ENCODE measurements at regions of chrX and their contacts with region 1.

Region 1: GRCh38 chrX:130637591-130637990 is 235.8 kb downstream of the RBMX2 start:
- DNase-seq: no peak
- ATAC-seq: no peak
- H3K4me3 ChIP-seq: no peak overlapping the region
- H3K27ac ChIP-seq: no peak overlapping the region
- H3K4me1 ChIP-seq: no peaks in the 10 kb centered on the region
- H3K27me3 ChIP-seq: peaks cover 0 to 8% (median 0%) of the 10 kb centered on the region in 7 donors
- CTCF ChIP-seq: no peak

Region 2: GRCh38 chrX:130649738-130650137 is 12.1 kb after region 1 on chrX:
- intact Hi-C with region 1: loop called in 1 of 10 experiments (anchors 2 kb)
- DNase-seq: no peak
- ATAC-seq: no peak
- H3K4me3 ChIP-seq: no peak overlapping the region
- H3K27ac ChIP-seq: no peak overlapping the region
- H3K4me1 ChIP-seq: no peaks in the 10 kb centered on the region
- H3K27me3 ChIP-seq: no peaks in the 10 kb centered on the region
- CTCF ChIP-seq: no peak

Region 3: GRCh38 chrX:130704053-130705038 is 66.8 kb after region 1 on chrX:
- intact Hi-C with region 1: no loop called
- DNase-seq: no peak
- ATAC-seq: peak in 3 of 8 donors; percentile 15 to 44 (median 39)
- H3K4me3 ChIP-seq: no peak overlapping the region
- H3K27ac ChIP-seq: peak overlapping the region in 5 of 10 donors; percentile 23 to 53 (median 30)
- H3K4me1 ChIP-seq: peaks cover 0 to 23% (median 0%) of the 10 kb centered on the region in 9 donors
- H3K27me3 ChIP-seq: peaks cover 0 to 2% (median 0%) of the 10 kb centered on the region in 7 donors
- CTCF ChIP-seq: no peak